ENCODE measurements at regions of chr19 and their contacts with region 1.

Region 1: DNA sequence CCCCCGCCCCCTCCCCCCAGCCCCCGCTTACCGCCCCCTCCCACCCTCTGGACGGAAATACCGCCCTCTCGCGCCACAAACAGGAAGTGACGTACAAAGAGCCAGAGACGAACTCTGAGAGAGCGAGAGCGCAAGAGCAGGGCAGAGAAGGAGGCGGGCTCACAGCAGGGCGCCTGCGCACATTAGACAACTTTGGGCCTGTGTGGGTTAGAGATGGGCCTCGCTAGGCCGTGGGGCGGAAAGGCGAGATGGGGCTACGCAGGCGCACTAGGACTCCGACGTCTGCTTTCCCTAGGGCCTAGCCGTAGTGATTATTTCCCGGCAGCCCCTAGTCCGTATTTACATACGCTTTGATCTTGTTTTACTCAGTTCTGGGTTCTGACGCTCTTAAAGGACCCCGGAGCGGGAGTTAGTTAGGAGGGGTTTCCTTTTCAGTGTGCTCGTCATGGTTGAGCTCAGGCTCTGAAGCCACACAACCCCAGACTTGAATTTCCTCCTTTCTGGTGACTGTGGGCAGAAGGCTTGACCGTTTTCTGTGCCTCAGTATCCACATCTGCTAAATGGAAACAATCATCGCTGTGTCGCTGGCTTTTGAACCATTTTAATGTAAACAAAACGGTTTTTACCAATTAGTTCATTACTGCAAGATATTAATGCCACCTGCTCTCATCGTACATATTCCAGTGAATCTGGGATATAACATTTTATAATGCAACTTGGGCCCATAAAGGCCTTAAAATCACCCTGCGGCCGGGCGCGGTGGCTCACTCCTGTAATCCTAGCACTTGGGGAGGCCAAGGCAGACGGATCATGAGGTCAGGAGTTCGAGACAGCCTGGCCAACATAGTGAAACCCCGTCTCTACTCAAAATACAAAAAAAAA is 449 bp upstream of the AKT2 start:
- DNase-seq: peak; percentile 94 to 100 (median 98)
- ATAC-seq: peak; percentile 75
- H3K4me3 ChIP-seq: peak overlapping the region; percentile 68
- H3K4me3 Mint-ChIP-seq: peak overlapping the region; percentile 89
- H3K27ac ChIP-seq: peak overlapping the region; percentile 78 to 90
- H3K27ac Mint-ChIP-seq: peak overlapping the region; percentile 93
- H3K4me1 ChIP-seq: peaks cover 52% of the 10 kb centered on the region
- H3K4me1 Mint-ChIP-seq: peaks cover 46% of the 10 kb centered on the region
- H3K27me3 ChIP-seq: no peaks in the 10 kb centered on the region
- H3K27me3 Mint-ChIP-seq: no peaks in the 10 kb centered on the region
- CTCF ChIP-seq: no peak

Region 2: GRCh38 chr19:40257057-40257517 is 28.5 kb before region 1 on chr19:
- CTCF ChIA-PET with region 1: no interaction called
- POLR2A ChIA-PET with region 1: no interaction called
- intact Hi-C with region 1: no loop called
- DNase-seq: no peak
- ATAC-seq: no peak
- H3K4me3 ChIP-seq: no peak overlapping the region
- H3K4me3 Mint-ChIP-seq: no peak overlapping the region
- H3K27ac ChIP-seq: no peak overlapping the region
- H3K27ac Mint-ChIP-seq: no peak overlapping the region
- H3K4me1 ChIP-seq: peaks cover 4% of the 10 kb centered on the region
- H3K4me1 Mint-ChIP-seq: peaks cover 41% of the 10 kb centered on the region
- H3K27me3 ChIP-seq: no peaks in the 10 kb centered on the region
- H3K27me3 Mint-ChIP-seq: no peaks in the 10 kb centered on the region
- CTCF ChIP-seq: no peak

Region 3: GRCh38 chr19:40403262-40403984 is 117.8 kb after region 1 on chr19:
- CTCF ChIA-PET with region 1: no interaction called
- POLR2A ChIA-PET with region 1: interaction called, 4 read pairs
- intact Hi-C with region 1: loop called in 1 of 2 experiments (anchors 5 kb)
- DNase-seq: peak; percentile 46 to 89 (median 70)
- ATAC-seq: peak; percentile 45
- H3K4me3 ChIP-seq: peak overlapping the region; percentile 88
- H3K4me3 Mint-ChIP-seq: peak overlapping the region; percentile 94
- H3K27ac ChIP-seq: peak overlapping the region; percentile 22 to 56
- H3K27ac Mint-ChIP-seq: peak overlapping the region; percentile 64
- H3K4me1 ChIP-seq: peaks cover 34% of the 10 kb centered on the region
- H3K4me1 Mint-ChIP-seq: peaks cover 35% of the 10 kb centered on the region
- H3K27me3 ChIP-seq: no peaks in the 10 kb centered on the region
- H3K27me3 Mint-ChIP-seq: no peaks in the 10 kb centered on the region
- CTCF ChIP-seq: no peak